HEK293 (cell line): ENCODE measurements at regions of chr7 and their contacts with region 1.

Region 1: GRCh38 chr7:31192986-31193385 is 140.9 kb downstream of the ADCYAP1R1 start:
- H3K4me3 ChIP-seq: no peak overlapping the region
- H3K27ac ChIP-seq: no peak overlapping the region
- H3K4me1 ChIP-seq: no peaks in the 10 kb centered on the region
- CTCF ChIP-seq: peak; percentile 70

Region 2: DNA sequence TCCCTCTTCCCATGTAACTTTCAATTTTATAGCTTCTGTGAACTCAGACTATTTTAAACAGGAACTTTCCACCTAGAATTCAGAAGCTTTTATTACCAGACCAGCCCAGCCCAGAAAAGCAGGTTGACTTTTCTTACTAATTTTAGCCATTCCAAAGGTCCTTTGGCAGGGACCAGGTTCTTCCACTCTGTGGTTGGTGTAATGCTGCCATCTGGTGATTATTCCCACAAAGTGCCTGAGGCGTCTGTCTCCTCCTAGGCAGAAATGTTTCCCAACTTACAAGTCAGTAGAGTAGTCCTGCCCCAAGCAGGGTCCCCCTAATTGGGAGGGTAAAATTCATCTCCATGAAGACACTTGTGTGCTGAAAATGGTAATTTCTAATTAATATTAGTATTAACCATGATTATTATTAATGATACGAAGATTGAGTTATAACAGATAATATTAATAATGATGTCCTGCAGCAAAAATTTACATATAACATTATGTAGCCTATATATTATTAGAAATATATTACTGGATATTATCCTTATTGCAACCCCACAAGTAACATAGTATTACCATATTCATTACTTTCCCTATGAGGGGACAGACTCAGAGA is 441.0 kb after region 1 on chr7:
- CTCF ChIA-PET with region 1: interaction called, 17 read pairs
- POLR2A ChIA-PET with region 1: no interaction called
- H3K4me3 ChIP-seq: no peak overlapping the region
- H3K27ac ChIP-seq: no peak overlapping the region
- H3K4me1 ChIP-seq: no peaks in the 10 kb centered on the region
- CTCF ChIP-seq: no peak